Activated CD4-positive, alpha-beta memory T cell treated with anti-CD3 and anti-CD28 coated beads for 36 hours (primary cell): ENCODE measurements at regions of chr5 and their contacts with region 1.

Region 1: DNA sequence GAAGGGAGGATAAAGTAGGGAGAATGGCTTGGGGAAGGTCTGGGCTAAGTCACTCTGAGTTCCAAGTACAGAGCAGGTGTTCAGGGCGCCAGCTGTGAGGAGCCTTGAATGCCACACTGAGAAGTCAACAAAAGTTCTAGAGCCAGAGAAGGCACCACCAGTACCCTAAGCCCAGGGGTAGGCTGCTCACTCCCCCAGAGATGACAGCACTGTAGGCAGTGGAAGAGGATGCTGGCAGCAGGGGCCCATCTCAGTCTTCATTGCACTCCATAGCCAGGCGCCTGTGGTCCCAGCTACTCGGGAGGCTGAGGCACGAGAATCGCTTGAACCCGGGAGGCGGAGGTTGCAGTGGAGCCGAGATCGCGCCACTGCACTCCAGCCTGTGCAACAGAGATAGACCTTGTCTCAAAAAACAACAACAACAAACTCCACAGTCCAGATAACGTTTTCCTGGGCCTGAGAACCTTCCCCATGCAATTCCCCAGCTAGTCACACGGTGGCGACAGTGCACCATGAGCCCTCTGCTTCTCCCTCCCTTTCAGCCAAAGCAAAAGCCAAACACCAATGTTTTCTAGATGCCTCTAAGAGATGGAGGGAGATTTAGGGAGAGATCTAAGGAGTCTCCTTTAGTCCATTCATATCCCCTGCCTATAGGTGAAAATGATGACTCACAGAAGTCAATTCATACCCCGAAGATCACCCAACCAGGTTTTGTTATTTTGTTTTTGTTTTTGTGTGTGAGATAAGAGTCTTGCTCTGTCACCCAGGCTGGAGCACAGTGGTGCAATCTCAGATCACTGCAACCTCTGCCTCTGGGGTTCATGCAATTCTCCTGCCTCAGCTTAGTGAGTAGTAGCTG is 19.8 kb upstream of the NSD1 start:
- DNase-seq: peak; percentile 89
- H3K4me3 Mint-ChIP-seq: no peak overlapping the region
- H3K27ac Mint-ChIP-seq: no peak overlapping the region
- H3K4me1 Mint-ChIP-seq: peaks cover 21% of the 10 kb centered on the region
- H3K27me3 Mint-ChIP-seq: no peaks in the 10 kb centered on the region

Region 2: DNA sequence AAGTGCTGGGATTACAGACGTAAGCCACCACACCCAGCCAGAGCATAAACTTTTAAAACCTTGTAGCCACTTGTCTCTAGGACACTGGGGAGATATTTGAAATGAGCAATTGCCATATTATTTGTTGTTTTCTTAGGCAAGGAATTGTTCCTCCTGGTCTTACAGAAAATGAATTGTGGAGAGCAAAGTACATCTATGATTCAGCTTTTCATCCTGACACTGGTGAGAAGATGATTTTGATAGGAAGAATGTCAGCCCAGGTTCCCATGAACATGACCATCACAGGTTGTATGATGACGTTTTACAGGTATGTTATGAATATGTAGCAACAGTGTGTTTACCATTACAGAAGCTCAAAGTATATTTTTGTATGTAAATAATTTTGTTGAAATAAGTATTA is 1604.9 kb before region 1 on chr5:
- CTCF ChIA-PET with region 1: no interaction called
- POLR2A ChIA-PET with region 1: no interaction called
- intact Hi-C with region 1: no loop called
- DNase-seq: no peak
- H3K4me3 Mint-ChIP-seq: no peak overlapping the region
- H3K27ac Mint-ChIP-seq: peak overlapping the region; percentile 51
- H3K4me1 Mint-ChIP-seq: peaks cover 44% of the 10 kb centered on the region
- H3K27me3 Mint-ChIP-seq: no peaks in the 10 kb centered on the region

Region 3: DNA sequence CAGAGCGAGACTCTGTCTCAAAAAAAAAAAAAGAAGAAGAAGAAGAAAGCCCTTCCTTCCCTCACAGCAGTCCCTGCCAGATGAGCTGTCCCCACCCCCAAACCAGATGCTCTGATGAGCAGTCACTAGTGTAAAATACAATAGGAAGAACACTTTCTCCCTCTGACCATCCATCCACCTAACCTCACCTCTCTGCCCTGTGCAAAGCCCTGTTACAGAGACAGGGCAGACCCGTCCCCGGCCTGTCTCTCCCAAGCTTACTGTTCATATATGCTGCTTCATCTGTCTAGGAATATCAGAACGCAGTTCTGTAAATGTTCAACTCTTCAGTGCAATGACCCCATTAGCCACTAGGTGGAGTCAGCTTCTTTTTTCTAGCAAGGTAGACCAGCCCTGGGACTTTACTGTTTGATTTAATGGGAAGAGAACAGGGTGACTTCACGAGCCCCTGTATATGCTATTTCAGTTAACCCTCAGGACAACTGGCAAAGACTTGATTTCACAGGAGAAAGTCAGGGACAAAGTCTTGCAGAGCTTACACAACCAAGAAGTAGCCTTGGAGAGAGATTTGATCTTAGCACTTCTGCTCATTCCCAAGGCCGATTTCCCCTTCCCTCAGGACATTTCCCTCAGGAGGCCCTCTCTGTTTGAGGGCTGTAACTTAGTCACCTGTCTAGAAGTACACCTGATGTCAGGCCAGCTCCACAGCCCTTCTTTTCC is 42.0 kb before region 1 on chr5:
- CTCF ChIA-PET with region 1: interaction called, 95 read pairs
- POLR2A ChIA-PET with region 1: no interaction called
- intact Hi-C with region 1: loop called (anchors 1 kb)
- DNase-seq: peak; percentile 48
- H3K4me3 Mint-ChIP-seq: no peak overlapping the region
- H3K27ac Mint-ChIP-seq: no peak overlapping the region
- H3K4me1 Mint-ChIP-seq: peaks cover 2% of the 10 kb centered on the region
- H3K27me3 Mint-ChIP-seq: no peaks in the 10 kb centered on the region

Region 4: GRCh38 chr5:177126771-177127170 is 13.0 kb after region 1 on chr5:
- CTCF ChIA-PET with region 1: interaction called, 12 read pairs
- POLR2A ChIA-PET with region 1: interaction called, 3 read pairs
- intact Hi-C with region 1: no loop called
- DNase-seq: no peak
- H3K4me3 Mint-ChIP-seq: no peak overlapping the region
- H3K27ac Mint-ChIP-seq: no peak overlapping the region
- H3K4me1 Mint-ChIP-seq: peaks cover 25% of the 10 kb centered on the region
- H3K27me3 Mint-ChIP-seq: no peaks in the 10 kb centered on the region

Region 5: GRCh38 chr5:177133091-177133852 is 19.5 kb after region 1 on chr5 and contains the start of gene NSD1:
- CTCF ChIA-PET with region 1: interaction called, 66 read pairs
- POLR2A ChIA-PET with region 1: interaction called, 4 read pairs
- intact Hi-C with region 1: loop called (anchors 1 kb)
- DNase-seq: peak; percentile 93
- H3K4me3 Mint-ChIP-seq: peak within 1 kb of the TSS; percentile 90
- H3K27ac Mint-ChIP-seq: peak within 1 kb of the TSS; percentile 89
- H3K4me1 Mint-ChIP-seq: peaks cover 46% of the 10 kb centered on the region
- H3K27me3 Mint-ChIP-seq: no peaks in the 10 kb centered on the region
- total RNA-seq, gene NSD1: 54.6 to 55.5 TPM

Region 6: DNA sequence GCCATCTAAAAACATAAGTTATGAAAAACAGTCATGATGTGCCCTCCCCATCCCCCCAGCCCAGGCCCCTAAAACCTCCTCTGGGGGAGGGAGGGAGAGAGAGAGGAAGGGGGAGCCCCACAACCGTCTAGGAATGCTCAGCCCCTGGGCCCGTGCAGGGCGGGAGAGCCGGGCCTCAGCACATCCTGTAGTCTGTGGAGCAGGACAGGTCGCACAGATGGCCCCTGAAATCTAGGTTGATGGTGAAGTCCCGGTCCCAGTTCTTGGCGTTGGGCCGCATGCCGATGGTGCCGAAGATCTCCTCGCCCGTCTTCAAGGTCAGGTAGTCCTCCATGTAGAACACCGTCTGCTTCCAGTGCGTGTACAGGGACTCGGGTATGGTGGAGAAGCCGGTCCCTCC is 151.6 kb after region 1 on chr5:
- CTCF ChIA-PET with region 1: interaction called, 13 read pairs
- POLR2A ChIA-PET with region 1: no interaction called
- intact Hi-C with region 1: loop called (anchors 10 kb)
- DNase-seq: no peak
- H3K4me3 Mint-ChIP-seq: no peak overlapping the region
- H3K27ac Mint-ChIP-seq: no peak overlapping the region
- H3K4me1 Mint-ChIP-seq: peaks cover 7% of the 10 kb centered on the region
- H3K27me3 Mint-ChIP-seq: no peaks in the 10 kb centered on the region

Region 7: GRCh38 chr5:177303121-177303924 is 189.5 kb after region 1 on chr5 and contains the starts of genes PRELID1 and RAB24:
- CTCF ChIA-PET with region 1: interaction called, 24 read pairs
- POLR2A ChIA-PET with region 1: no interaction called
- intact Hi-C with region 1: loop called (anchors 2 kb)
- DNase-seq: peak; percentile 94
- H3K4me3 Mint-ChIP-seq: peak within 1 kb of the TSS; percentile 96
- H3K27ac Mint-ChIP-seq: peak within 1 kb of the TSS; percentile 82
- H3K4me1 Mint-ChIP-seq: peaks cover 56% of the 10 kb centered on the region
- H3K27me3 Mint-ChIP-seq: no peaks in the 10 kb centered on the region
- total RNA-seq, gene PRELID1: 247 to 248 TPM
- total RNA-seq, gene RAB24: 21.7 to 22.1 TPM

Region 8: GRCh38 chr5:177497292-177498033 is 383.7 kb after region 1 on chr5 and contains the start of gene PDLIM7:
- CTCF ChIA-PET with region 1: interaction called, 4 read pairs
- POLR2A ChIA-PET with region 1: no interaction called
- intact Hi-C with region 1: loop called (anchors 5 kb)
- DNase-seq: peak; percentile 96
- H3K4me3 Mint-ChIP-seq: peak within 1 kb of the TSS; percentile 82
- H3K27ac Mint-ChIP-seq: peak within 1 kb of the TSS; percentile 23
- H3K4me1 Mint-ChIP-seq: peaks cover 27% of the 10 kb centered on the region
- H3K27me3 Mint-ChIP-seq: peaks cover 8% of the 10 kb centered on the region
- total RNA-seq, gene PDLIM7: 50.2 to 56.6 TPM